ENCODE measurements at regions of chr14 and their contacts with region 1.

Region 1: GRCh38 chr14:60248697-60249318 is at the start of gene PPM1A:
- DNase-seq: peak; percentile 75 to 97
- H3K4me3 ChIP-seq: peak within 1 kb of the TSS; percentile 92 to 98
- H3K27ac ChIP-seq: peak within 1 kb of the TSS; percentile 97 to 100
- H3K4me1 ChIP-seq: peaks cover 0 to 29% of the 10 kb centered on the region in 2 donors
- H3K27me3 ChIP-seq: no peaks in the 10 kb centered on the region
- CTCF ChIP-seq: no peak
- total RNA-seq, gene PPM1A: 25.0 TPM

Region 2: DNA sequence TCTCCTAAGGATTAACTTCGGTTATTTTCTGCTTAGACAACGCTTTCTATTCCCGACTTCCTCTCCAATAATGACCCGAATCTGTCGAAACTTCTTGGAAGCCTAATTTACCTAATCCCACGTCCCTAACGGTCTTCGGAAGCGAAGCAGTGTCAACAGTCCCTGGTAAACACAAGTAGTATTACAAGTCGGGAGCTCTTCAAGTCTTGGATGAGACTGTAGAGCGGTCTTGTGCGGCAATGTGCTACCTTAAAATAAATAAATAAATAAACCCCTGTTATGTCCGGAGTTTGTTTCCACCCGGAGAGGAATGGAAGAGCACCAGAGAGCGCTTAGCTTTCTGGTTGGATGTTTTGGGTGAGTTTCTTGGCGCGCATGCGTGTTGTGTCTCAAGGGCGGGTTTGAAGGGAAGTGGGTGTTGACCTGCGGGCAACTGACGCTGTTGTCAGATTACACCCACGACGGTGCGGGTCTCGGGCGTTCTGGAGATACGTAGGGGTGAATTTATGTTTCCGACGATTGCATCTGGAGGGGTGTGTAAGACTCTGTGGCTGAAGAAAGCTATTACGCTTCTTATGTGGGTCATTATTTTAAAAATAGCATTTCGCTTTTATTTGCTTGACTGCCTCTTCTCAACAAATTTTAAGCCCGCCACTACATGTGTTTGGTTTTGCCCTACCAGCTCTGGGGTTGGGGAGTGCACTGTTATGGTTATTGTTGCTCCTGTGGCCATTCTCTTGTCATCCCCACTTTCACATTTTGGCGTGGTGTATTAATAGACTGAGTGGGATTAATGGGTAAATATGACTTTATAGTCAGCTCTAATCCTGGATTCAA is 1821.3 kb before region 1 on chr14 and contains the starts of genes KIAA0586 and TIMM9:
- intact Hi-C with region 1: loop called (anchors 5 kb)
- DNase-seq: peak; percentile 88 to 98
- H3K4me3 ChIP-seq: peak within 1 kb of the TSS; percentile 66 to 94
- H3K27ac ChIP-seq: peak within 1 kb of the TSS; percentile 85 to 91
- H3K4me1 ChIP-seq: peaks cover 0 to 12% of the 10 kb centered on the region in 2 donors
- H3K27me3 ChIP-seq: no peaks in the 10 kb centered on the region
- CTCF ChIP-seq: no peak
- total RNA-seq, gene KIAA0586: 20.1 TPM
- total RNA-seq, gene TIMM9: 0.96 TPM

Region 3: DNA sequence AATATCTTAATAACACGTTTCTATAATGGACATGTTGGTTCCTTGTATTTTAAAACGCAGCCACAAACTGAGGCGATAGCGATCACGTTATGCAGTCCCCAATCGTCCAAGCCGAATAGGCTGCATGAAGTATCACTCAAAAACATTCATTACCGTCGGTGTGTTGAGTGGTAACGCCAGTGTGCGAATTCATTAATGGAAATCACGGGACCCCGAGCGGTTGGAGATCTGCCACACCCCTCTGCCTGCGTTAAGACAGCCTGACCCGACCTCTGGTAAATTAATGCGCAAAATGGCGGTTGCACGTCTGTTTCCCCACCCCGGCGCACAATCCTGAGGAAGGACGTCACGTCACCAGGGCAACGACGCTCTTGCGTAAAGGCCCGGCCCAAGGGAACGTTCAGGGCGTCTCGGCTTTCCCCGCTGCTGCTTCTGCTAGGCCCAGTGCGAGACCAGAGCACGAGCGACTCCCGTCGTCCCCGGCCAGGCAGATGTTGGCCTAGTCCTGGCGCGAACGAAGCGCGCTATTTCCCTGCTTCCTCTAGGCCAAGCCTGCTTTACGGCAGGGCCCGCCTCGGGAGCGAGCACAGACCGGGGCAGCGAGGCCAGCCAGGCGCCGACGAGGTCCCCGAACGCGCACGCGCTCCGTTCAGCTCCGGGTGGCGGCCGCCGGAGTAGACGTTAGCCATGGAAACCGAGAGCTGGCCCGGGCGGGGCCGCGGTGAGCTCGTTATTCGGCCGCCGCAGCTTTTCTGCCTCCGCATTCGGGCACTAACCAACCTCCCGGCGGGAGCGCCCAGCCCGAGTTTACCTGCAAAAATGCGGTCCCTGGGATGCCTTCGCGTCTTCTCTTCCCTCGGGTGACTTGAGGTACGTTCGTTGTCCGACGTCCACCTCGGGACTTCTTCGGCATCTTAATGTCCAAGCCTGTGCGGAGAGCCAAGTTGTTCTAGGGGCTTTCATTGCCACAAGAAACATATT is 157.0 kb before region 1 on chr14 and contains the start of gene PCNX4:
- intact Hi-C with region 1: loop called (anchors 1 kb)
- DNase-seq: peak; percentile 88 to 98
- H3K4me3 ChIP-seq: peak within 1 kb of the TSS; percentile 72 to 92
- H3K27ac ChIP-seq: peak within 1 kb of the TSS; percentile 95 to 96
- H3K4me1 ChIP-seq: peaks cover 0 to 11% of the 10 kb centered on the region in 2 donors
- H3K27me3 ChIP-seq: no peaks in the 10 kb centered on the region
- CTCF ChIP-seq: no peak
- total RNA-seq, gene PCNX4: 47.8 TPM

Region 4: GRCh38 chr14:60495946-60496345 is 247.1 kb after region 1 on chr14:
- intact Hi-C with region 1: no loop called
- DNase-seq: no peak
- H3K4me3 ChIP-seq: no peak overlapping the region
- H3K27ac ChIP-seq: no peak overlapping the region
- H3K4me1 ChIP-seq: no peaks in the 10 kb centered on the region
- H3K27me3 ChIP-seq: no peaks in the 10 kb centered on the region
- CTCF ChIP-seq: no peak